Gastrocnemius medialis (tissue), 4 donors: ENCODE measurements at regions of chr17 and their contacts with region 1.

Region 1: DNA sequence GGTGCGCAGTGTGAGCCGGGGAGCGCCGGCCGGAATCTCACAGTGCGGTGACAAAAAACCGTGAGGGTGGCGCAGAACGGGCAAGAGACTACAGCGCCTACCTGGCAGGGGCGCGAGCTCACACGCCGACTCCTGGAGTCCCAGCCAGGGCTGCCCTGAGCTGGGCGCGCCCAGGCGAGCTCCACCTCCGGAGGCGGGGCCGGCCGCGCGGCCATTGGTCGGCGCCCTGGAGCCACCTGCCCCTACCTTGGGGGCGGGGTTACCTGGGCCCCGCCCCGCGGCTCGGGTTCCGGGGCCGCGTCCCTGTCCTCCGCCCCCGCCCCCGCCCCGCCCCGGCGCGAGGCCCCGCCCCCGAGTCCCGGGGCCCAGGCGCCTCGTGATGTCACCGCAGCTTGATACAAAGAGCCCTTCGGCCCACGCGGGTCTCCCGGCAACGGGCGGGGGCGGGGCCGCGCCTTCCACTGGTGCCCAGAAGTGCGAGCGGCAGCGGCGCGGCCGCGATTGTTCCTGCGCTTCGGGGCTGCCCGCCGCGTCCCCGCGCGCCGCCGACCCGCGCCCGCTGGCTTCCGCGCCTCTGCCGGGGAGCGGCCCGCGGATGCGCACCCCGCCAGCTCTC is 96.3 kb downstream of the RAB11FIP4 start:
- DNase-seq: peak; percentile 39 to 74
- ATAC-seq: peak; percentile 72 to 83
- H3K4me3 ChIP-seq: peak overlapping the region; percentile 43 to 61 (median 56)
- H3K27ac ChIP-seq: peak overlapping the region in 3 of 4 donors; percentile 11 to 47 (median 21)
- H3K4me1 ChIP-seq: peaks cover 3 to 9% of the 10 kb centered on the region in 2 donors
- H3K27me3 ChIP-seq: peaks cover 0 to 3% (median 0%) of the 10 kb centered on the region in 3 donors
- CTCF ChIP-seq: no peak
- POLR2A ChIP-seq: peak in 1 of 2 donors; percentile 6

Region 2: DNA sequence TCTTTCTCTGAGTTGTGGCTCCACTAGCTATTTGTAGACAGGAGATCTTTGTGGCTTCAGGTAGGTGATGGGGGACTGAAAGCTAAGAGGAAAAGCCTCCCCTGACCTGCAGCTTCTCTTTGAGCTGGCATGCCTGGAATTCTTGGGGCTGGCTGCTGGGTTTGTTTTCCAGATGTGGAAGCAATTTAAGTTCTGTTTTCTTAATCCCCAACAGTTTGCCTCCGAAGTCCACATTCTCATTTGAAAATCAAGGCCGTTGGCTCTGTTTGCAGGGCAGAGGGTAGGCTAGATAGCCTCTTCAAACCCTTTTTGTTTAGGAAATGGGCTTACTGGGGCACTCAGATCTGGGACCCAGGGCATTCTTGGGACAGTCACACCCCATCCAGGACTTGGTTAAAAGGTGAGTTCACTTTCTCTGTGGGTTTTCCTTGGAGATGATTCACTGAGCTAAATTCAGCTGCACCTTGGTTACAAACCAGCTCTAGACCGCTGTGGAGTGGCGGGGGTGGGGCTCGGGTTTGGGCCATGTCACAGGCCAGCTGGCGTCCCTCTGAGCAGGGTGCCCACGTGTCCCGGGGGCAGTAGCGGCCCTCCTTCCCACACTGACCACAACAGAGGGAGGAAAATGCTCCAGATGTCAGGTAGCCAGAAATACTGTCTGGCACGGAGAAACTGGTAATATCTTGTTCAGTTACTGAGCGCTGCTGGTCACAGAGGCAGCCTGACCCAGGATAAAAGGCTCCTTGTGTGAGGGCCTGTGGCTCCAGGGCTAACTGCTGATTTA is 12.2 kb after region 1 on chr17:
- in situ Hi-C with region 1: no loop called
- intact Hi-C with region 1: loop called (anchors 1 kb)
- DNase-seq: peak; percentile 85 to 92
- ATAC-seq: peak; percentile 99
- H3K4me3 ChIP-seq: peak overlapping the region in 1 of 4 donors; percentile 27
- H3K27ac ChIP-seq: peak overlapping the region; percentile 76 to 82 (median 79)
- H3K4me1 ChIP-seq: peaks cover 14 to 18% of the 10 kb centered on the region in 2 donors
- H3K27me3 ChIP-seq: no peaks in the 10 kb centered on the region
- CTCF ChIP-seq: no peak
- POLR2A ChIP-seq: no peak

Region 3: DNA sequence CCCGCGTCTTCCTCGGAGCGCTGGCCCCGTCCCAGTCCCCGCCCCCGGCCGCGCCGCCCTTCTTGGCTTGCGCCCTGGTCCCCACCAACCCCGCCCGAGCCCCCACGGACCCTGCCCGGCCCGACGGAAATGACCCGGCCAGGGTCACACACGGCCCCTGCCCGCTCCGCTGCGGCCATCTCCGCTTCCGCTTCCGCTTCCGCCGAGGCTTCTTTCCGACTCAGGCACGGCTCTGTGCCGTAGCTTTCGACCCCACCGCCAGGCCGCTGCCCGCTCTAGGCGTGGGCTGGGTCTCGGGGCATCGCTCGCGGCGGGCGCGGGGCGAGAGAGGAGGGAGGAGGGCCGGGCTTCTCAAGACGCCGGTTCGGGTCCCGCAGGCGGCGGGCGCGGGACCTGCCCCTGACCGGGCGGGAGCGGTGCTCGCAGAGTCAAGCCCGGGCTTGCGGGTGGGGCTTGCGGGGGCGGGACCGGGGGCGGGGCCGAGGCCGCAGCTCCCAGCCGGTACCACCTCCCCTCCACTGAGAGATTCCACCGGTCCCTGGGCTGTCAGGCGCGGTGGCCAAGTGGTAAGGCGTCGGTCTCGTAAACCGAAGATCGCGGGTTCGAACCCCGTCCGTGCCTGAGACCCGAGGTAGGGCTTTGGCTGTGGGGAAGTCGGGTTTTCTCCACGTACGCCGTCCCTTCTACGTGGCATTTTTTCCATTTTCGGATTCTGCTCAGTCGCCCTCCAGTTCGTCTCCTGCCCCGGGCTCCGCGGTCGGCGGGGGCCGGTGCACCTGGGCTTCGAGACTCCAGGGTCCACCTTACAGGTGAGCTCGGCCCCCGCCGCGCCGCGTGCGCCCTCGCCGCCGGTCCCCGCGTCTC is 62.0 kb after region 1 on chr17:
- in situ Hi-C with region 1: no loop called
- intact Hi-C with region 1: loop called (anchors 2 kb)
- DNase-seq: peak; percentile 83 to 85
- ATAC-seq: peak; percentile 92 to 93
- H3K4me3 ChIP-seq: peak overlapping the region; percentile 83 to 99 (median 94)
- H3K27ac ChIP-seq: peak overlapping the region; percentile 86 to 92 (median 91)
- H3K4me1 ChIP-seq: peaks cover 2 to 5% of the 10 kb centered on the region in 2 donors
- H3K27me3 ChIP-seq: no peaks in the 10 kb centered on the region
- CTCF ChIP-seq: no peak
- POLR2A ChIP-seq: peak; percentile 69 to 72

Region 4: GRCh38 chr17:31596382-31597323 is 108.9 kb after region 1 on chr17:
- in situ Hi-C with region 1: no loop called
- intact Hi-C with region 1: loop called (anchors 5 kb)
- DNase-seq: peak; percentile 89 to 94
- ATAC-seq: peak; percentile 89 to 91
- H3K4me3 ChIP-seq: no peak overlapping the region
- H3K27ac ChIP-seq: peak overlapping the region; percentile 88 to 96 (median 90)
- H3K4me1 ChIP-seq: peaks cover 17 to 29% of the 10 kb centered on the region in 2 donors
- H3K27me3 ChIP-seq: no peaks in the 10 kb centered on the region
- CTCF ChIP-seq: peak in 2 of 5 experiments; percentile 24 to 33
- POLR2A ChIP-seq: peak; percentile 23 to 35

Region 5: DNA sequence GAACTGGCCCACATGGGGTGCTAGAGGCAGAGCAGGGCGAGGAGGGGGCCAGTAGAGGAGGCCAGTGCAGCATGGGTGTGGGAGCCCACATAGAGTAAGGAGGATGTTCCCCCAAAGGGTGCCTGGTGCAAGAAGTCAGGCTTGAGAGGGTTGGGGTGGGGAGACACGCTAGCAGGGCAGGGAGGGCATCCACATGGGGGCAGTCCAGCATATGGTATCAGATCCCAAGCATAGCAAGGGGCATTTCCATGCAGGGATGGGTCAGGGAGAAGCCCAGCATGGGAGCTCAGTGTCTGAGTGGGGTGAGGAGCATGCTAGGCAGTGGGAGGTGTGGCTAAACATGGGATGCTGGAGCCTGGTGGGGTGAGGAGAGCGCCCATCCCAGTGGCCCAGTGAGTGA is 157.6 kb after region 1 on chr17:
- in situ Hi-C with region 1: no loop called
- intact Hi-C with region 1: no loop called
- DNase-seq: no peak
- ATAC-seq: no peak
- H3K4me3 ChIP-seq: no peak overlapping the region
- H3K27ac ChIP-seq: no peak overlapping the region
- H3K4me1 ChIP-seq: no peaks in the 10 kb centered on the region
- H3K27me3 ChIP-seq: peaks cover 0 to 3% (median 0%) of the 10 kb centered on the region in 3 donors
- CTCF ChIP-seq: no peak
- POLR2A ChIP-seq: no peak